ENCODE measurements at regions of chr2 and their contacts with region 1.

Region 1: DNA sequence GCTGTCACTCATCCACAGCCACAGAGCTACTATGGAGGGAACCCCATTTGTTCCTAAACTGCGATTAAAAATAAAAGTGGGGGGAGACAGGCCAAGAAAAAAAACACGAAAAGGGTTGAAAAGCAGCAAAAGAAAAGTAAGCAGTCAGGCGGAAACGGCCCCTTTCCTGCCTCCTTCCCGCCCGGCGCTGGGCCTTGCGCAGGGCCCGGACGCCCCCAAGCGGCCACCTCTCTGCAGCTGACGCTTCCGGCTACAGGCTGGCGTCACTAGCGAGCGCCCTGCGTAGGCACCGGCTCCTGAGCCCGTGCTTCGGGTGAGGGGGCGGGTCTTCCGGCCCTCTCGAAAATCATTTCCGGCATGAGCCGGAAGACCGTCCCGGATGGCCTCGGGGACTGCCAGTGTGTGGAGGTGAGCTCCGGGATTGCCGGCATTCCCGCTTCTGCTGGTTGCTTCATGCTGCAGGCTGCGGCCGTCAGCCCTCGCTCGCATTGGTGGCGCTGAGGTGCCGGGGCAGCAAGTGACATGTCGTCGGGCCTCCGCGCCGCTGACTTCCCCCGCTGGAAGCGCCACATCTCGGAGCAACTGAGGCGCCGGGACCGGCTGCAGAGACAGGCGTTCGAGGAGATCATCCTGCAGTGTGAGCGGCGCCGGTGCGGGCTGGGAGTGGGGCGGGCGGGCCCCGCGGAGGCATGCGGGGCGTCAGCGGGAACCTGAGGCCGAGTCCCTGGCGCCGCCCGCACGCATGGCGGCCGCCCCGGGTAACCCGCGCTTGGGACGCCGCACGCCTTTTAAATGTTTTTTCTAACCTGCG is at the start of gene ATG16L1:
- DNase-seq: peak; percentile 98
- ATAC-seq: peak; percentile 100
- H3K4me3 ChIP-seq: peak within 1 kb of the TSS; percentile 91
- H3K27ac ChIP-seq: peak within 1 kb of the TSS; percentile 86
- H3K4me1 ChIP-seq: peaks cover 16% of the 10 kb centered on the region
- H3K27me3 ChIP-seq: no peaks in the 10 kb centered on the region
- CTCF ChIP-seq: peak; percentile 93
- total RNA-seq, gene ATG16L1: 26.6 TPM

Region 2: GRCh38 chr2:232839411-232840079 is 412.0 kb before region 1 on chr2:
- intact Hi-C with region 1: loop called (anchors 10 kb)
- DNase-seq: no peak
- ATAC-seq: peak; percentile 81
- H3K4me3 ChIP-seq: no peak overlapping the region
- H3K27ac ChIP-seq: no peak overlapping the region
- H3K4me1 ChIP-seq: peaks cover 22% of the 10 kb centered on the region
- H3K27me3 ChIP-seq: no peaks in the 10 kb centered on the region
- CTCF ChIP-seq: no peak

Measured in upper lobe of right lung (tissue), 1 donor.